ENCODE measurements at regions of chr10 and their contacts with region 1.

Region 1: DNA sequence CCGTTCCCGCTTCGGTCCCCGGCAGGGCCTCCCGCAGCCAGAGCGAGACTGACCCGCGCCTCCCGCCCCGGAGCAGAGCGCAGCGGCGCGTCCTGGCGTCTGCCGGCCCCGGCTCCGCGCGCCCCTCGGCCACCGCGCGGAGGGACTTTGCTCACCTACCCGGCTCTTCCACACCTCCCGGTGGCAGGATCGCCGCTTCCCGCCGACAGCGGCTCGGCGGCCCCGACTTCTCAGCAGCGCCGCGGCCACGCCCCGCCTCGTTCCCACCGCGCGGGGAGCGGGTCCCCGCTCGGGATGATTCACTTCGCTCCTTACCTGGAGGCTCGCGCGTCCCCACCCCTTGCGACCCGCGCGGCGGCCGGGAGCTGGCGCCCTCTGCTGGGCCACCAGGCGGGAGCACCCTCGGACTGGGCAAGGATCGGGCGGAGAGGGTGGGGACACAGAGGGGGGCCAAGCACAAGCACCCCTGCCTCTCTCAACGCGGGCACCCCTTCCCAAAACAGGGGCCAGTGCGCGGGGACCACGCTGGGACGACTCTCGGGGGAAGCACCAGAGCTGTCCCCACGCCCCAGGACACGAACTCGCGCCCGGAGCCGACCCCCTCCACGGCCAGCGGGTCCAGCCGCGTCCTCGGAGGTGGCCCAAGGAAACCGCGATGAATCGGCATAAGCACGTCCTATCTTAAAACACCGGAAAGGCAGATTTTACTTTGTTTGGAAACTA is 101.0 kb upstream of the SVIL start:
- DNase-seq: peak; percentile 91
- ATAC-seq: peak; percentile 92

Region 2: GRCh38 chr10:29535012-29535777 is 200.6 kb before region 1 on chr10:
- intact Hi-C with region 1: loop called (anchors 10 kb)
- DNase-seq: peak; percentile 60
- ATAC-seq: peak; percentile 76

Region 3: DNA sequence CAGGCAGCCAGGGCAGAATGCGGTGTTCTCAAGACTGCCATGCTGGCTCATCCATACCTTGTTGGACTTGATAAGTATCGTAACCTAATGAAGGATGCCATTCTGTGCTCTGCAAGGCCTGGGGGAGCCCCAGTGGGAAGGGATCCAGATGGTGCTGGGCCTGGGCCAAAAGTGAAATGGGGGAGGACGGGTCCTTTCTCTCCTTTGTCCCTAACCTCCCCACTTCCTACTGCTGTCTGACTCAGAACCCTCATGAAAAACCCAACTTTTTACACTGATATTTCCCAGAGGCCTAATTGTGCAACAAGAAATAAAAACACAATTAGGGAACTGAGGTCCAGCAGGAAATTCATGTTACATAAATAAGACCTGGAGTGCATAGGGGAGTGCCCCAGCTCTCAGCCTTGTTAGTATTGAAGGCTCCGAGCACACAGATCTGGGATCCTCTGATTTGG is 92.7 kb after region 1 on chr10:
- intact Hi-C with region 1: no loop called
- DNase-seq: no peak
- ATAC-seq: no peak

Region 4: DNA sequence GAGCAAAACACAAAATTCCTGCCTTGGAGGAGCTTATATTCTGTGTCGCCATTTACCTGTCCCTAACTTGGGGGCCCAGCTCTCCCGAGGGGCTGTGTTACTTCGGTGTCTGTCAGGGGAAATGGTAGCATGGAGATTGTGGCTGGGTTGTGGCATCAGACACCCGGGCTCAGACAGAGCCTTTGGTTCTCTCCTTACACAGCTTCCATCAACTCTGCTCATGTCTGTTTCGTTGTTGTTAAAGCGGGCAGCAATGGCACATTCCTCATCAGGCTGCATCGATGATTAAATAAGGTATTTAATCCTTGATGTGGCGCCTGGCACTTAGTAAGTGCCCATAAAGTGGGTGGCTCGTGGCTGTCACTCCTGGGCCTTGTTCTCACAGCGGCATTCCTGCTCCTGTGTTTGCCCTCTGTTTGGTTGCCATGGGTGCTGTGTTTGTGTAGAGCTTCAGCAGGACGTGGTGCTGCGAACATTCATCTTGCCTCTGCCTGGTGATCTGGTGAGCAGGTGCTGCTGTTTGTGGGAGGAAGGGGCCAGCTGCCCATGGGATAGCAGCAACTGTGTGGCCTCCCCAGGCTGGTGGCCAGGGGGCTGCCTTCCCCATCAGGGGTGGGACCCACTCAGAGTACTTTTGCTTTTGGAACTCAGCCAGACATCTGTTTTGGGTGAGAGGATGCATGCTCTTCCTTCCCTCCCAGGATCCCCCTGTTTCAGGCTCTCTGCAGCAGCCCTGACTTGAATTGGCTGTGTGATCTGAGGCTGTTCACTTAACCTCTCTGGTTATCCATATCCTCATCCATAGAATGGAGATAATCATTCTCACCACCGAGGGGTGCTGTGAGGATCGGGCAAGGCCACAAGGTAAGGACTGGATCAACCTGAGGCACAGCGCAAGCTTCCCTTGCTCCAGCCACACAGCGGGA is 106.2 kb after region 1 on chr10:
- intact Hi-C with region 1: loop called (anchors 5 kb)
- DNase-seq: peak; percentile 77
- ATAC-seq: peak; percentile 87

Region 5: GRCh38 chr10:29857843-29858701 is 122.3 kb after region 1 on chr10:
- intact Hi-C with region 1: loop called (anchors 5 kb)
- DNase-seq: peak; percentile 82
- ATAC-seq: peak; percentile 92

Region 6: DNA sequence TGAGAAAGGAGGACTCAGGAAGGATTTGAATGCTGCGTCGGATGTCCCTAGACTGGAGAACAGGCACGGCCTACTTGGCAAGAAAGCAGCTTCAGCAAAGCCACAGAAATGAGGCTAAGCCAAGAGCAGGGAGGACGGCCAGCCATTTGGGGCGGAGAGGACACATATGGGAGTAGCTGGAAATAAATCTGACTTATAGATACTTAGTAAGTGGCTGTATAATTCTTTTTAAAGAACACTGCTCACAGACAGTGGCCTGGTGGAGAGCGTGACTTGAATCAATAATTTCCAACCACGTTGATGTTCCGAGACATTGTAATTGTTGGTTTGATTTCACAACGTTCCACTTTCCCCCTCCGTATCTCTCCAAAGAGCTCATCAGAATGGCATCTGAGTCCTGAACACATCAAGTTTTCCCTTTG is 391.4 kb after region 1 on chr10:
- intact Hi-C with region 1: no loop called
- DNase-seq: no peak
- ATAC-seq: peak; percentile 36